Breast epithelium (tissue), 4 donors: ENCODE measurements at regions of chr17 and their contacts with region 1.

Region 1: DNA sequence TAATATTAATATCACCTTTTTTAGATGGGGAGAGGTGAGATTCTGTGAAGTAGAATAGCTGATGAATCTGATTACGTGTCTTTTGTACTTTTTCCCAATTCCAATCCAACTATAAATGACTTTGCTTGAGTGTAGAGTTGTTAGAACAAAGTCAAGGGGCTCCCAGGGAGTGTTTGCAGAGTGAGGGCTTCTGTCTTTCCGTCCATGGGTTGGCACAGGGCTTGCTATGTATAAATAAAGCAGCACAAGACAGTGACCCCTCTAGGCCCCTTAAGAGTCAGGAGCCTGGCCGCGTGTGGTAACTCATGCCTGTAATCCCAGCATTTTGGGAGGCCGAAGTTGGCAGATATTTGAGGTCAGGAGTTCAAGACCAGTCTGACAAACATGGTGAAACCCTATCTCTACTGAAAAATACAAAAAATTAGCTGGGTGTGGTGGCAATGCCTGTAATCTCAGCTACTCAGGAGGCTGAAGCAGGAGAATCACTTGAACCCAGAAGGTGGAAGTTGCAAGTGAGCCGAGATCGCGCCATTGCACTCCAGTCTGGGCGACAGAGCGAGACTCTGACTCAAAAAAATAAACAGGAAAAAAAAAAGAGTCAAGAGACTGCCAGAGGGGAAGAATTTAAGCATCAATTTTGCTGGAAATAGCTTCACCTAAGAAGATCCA is 127.9 kb upstream of the HS3ST3A1 start:
- DNase-seq: no peak
- H3K4me3 ChIP-seq: no peak overlapping the region
- H3K27ac ChIP-seq: no peak overlapping the region
- H3K4me1 ChIP-seq: no peaks in the 10 kb centered on the region
- H3K27me3 ChIP-seq: no peaks in the 10 kb centered on the region
- CTCF ChIP-seq: no peak
- POLR2A ChIP-seq: no peak

Region 2: DNA sequence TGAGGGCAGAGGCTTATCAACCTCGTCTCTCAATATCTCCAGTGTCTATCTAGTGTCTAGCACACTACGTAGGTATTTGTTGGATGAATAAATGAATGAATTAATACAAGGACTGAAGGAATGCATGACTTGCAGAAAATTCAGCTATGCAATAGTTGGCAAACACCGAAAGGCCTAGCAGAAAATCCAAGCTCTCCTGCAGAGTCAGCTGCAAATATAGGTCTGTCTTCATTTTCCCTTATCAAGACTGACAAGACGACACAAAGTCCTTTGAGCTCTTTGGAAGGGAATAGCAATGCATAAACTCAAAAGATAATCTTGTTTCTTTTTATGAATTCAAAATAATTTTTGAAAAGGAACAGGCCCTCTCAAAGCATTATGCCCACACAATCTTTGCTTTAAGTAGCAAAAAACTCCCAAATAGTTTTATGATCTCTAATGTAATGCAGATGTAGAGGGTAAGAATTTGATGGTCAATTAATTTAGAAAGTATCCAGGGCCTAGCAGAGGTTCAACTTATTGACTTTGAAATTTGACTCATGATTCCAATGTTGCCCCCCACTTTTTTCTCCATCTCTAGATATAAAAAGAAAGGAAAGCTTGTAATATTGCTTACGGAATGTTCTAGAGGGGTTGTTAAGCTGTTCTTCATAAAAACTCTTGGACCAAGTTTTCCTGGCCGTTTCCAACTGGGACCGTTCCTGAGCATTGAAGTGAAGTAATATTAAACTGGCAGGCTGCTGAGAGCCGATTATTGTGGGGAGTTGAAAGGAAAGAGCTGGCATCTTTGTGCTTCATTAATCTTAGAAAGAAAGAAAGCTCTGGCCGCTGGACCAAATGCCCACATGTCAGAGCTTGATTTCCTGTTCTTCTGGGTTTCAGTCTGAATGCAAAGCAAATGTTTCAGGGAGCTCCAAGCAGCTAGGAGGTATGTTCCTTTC is 355.1 kb before region 1 on chr17:
- intact Hi-C with region 1: loop called (anchors 5 kb)
- DNase-seq: no peak
- H3K4me3 ChIP-seq: no peak overlapping the region
- H3K27ac ChIP-seq: peak overlapping the region in 1 of 2 donors; percentile 25
- H3K4me1 ChIP-seq: no peaks in the 10 kb centered on the region
- H3K27me3 ChIP-seq: no peaks in the 10 kb centered on the region
- CTCF ChIP-seq: no peak
- POLR2A ChIP-seq: no peak